Mammary epithelial cell (primary cell): ENCODE measurements at regions of chr1 and their contacts with region 1.

Region 1: GRCh38 chr1:199243423-199244061 is 604.7 kb downstream of the PTPRC start:
- DNase-seq: peak; percentile 26
- H3K4me3 ChIP-seq: no peak overlapping the region
- H3K27ac ChIP-seq: no peak overlapping the region
- H3K4me1 ChIP-seq: no peaks in the 10 kb centered on the region
- H3K27me3 ChIP-seq: no peaks in the 10 kb centered on the region
- CTCF ChIP-seq: peak; percentile 62 to 78

Region 2: DNA sequence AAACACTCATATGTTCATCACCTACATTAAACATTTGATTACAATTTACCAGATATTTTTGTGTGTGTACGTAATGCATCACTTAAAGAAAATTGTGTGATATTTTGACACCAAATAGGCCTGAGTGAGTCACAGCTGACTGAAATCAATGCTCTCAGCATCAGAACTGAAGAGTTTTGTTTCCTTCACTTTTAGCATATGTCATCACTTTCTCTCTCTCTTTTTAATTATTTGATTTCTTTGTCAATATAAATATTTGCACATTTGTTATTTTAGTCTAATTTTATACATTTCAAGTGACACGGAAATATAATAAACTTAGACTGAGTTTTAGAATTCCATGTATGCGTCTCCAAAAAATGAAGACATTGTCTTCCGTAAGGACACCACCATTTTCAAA is 59.4 kb before region 1 on chr1:
- CTCF ChIA-PET with region 1: interaction called, 10 read pairs
- dilution Hi-C with region 1: no loop called
- in situ Hi-C with region 1: no loop called
- intact Hi-C with region 1: no loop called
- DNase-seq: no peak
- H3K4me3 ChIP-seq: no peak overlapping the region
- H3K27ac ChIP-seq: no peak overlapping the region
- H3K4me1 ChIP-seq: no peaks in the 10 kb centered on the region
- H3K27me3 ChIP-seq: no peaks in the 10 kb centered on the region
- CTCF ChIP-seq: no peak

Region 3: GRCh38 chr1:199422198-199422597 is 178.7 kb after region 1 on chr1:
- CTCF ChIA-PET with region 1: no interaction called
- dilution Hi-C with region 1: no loop called
- in situ Hi-C with region 1: no loop called
- intact Hi-C with region 1: loop called (anchors 1 kb)
- DNase-seq: peak; percentile 45
- H3K4me3 ChIP-seq: no peak overlapping the region
- H3K27ac ChIP-seq: no peak overlapping the region
- H3K4me1 ChIP-seq: no peaks in the 10 kb centered on the region
- H3K27me3 ChIP-seq: no peaks in the 10 kb centered on the region
- CTCF ChIP-seq: peak; percentile 44 to 69

Region 4: DNA sequence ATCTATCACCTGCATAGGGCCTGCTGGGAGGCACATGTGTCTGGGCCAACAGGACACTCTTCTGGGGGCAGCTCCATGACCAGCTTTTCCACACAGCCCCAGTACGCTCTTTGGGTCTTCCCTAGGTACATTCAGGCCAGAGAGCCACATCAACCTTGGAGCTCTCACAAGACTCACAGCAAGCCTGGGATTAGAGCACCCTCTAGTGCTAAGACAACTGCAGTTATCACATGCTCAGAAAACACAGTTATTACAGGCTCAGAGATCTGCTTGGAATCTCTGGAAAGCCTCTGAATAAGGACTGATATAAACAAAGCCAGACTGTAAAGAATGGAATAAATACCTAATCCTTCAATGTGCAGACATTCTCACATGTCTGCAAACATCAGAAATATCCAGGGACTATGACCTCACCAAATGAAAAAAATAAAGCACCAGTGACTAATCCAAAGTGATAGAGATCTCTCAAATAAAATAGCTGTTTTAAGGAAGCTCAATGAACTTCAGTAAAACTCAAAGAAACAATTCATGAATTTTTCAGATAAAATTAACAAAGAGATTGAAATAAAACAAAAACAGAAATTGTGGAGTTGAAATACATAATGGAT is 220.1 kb after region 1 on chr1:
- CTCF ChIA-PET with region 1: no interaction called
- dilution Hi-C with region 1: no loop called
- in situ Hi-C with region 1: no loop called
- intact Hi-C with region 1: loop called (anchors 1 kb)
- DNase-seq: peak; percentile 45
- H3K4me3 ChIP-seq: no peak overlapping the region
- H3K27ac ChIP-seq: no peak overlapping the region
- H3K4me1 ChIP-seq: no peaks in the 10 kb centered on the region
- H3K27me3 ChIP-seq: peaks cover 3% of the 10 kb centered on the region
- CTCF ChIP-seq: peak; percentile 78 to 80